AG04449 (cell line): ENCODE measurements at regions of chr6 and their contacts with region 1.

Region 1: DNA sequence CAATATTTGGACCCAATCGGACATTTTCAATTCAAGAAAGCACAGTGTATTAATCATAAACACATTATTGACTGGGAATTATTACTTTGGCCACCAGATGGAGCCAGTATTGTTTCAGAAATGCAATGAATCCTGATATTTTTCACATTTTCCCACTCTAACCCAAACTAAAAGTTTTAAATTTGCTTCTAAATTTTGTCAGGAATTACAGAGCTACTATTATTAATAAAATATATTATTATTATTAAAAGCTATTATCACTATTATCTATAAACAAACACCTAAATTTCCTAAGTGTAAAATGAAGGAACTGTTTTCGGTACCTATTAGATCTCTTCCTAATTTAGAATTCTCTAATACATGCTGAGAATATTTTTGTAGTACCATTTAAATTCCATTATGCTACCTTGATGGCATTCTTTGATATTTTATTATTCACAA is 245.3 kb downstream of the OGFRL1 start:
- DNase-seq: no peak
- H3K4me3 ChIP-seq: no peak overlapping the region
- CTCF ChIP-seq: peak; percentile 32

Region 2: DNA sequence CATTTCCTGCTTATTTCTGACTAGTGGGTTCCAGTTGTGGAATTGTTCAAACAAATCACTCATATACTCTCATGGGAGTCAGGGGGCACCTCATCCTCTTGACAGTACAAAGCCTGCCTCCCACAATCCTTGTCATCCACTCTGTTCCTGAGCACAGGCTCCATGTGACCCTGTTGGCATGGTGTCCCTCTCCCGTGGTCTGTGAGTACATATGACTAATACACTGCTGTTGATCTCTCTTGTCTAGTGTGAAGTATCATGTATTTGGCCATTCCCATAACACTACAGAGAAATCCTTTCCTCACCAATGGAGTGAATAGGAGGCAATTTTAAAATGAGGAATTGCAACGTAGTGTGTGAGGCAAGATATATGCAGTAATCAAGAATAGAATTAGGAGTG is 60.0 kb before region 1 on chr6:
- CTCF ChIA-PET with region 1: no interaction called
- POLR2A ChIA-PET with region 1: no interaction called
- DNase-seq: peak; percentile 63
- H3K4me3 ChIP-seq: no peak overlapping the region
- CTCF ChIP-seq: no peak

Region 3: GRCh38 chr6:71523548-71523947 is 10.4 kb before region 1 on chr6:
- CTCF ChIA-PET with region 1: interaction called, 18 read pairs
- POLR2A ChIA-PET with region 1: no interaction called
- DNase-seq: no peak
- H3K4me3 ChIP-seq: no peak overlapping the region
- CTCF ChIP-seq: no peak

Region 4: DNA sequence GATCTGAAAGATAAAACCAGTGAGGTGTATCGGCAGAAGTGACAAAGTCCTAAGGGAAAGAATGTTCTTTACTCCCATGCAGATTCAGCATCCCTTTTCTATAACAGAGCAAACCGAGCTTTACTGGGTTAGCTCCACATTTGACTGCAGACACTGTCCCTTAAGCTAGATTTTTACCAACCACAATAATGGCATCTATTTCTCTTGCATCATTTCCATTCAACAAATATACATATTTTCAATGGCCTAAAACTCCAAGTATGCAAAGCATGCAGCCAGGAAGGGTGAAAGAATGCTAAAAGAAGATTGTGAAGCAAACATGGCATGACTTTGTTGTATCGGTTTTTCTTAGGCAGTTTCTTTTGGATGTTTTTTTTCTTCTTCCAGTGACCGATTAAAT is 10.1 kb after region 1 on chr6:
- CTCF ChIA-PET with region 1: interaction called, 28 read pairs
- POLR2A ChIA-PET with region 1: no interaction called
- DNase-seq: peak; percentile 52
- H3K4me3 ChIP-seq: no peak overlapping the region
- CTCF ChIP-seq: no peak

Region 5: DNA sequence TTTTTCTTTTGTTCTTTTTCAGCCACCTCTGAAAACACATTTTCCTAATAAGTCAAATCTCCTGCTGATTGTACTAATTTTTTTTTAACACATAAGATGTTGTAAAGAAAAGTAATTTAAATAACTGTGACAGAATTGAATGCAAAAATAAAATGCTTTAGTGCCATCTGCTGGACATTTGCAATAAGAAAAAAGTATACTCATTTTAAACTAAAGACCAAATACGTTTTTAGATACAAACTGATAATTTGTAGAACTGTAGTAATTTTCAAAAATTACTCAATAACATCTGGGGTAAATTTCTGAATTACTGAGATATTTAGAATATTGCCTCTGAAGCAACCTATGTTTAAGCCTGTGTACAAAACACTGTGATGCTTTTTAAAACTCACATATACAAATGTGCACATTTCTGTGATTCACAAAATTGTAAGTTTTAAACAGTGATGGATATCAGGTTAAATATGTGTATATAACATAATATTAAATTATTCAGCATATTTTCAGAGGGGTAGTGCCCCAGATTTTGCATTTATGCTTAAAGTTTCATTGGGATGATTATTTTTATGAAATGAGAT is 551.1 kb after region 1 on chr6:
- CTCF ChIA-PET with region 1: interaction called, 121 read pairs
- POLR2A ChIA-PET with region 1: no interaction called
- DNase-seq: no peak
- H3K4me3 ChIP-seq: no peak overlapping the region
- CTCF ChIP-seq: no peak